Transverse colon (tissue), 4 donors: ENCODE measurements at regions of chr3 and their contacts with region 1.

Region 1: GRCh38 chr3:57100046-57100695 is 39.7 kb downstream of the SPATA12 start:
- DNase-seq: peak; percentile 71
- H3K4me3 ChIP-seq: no peak overlapping the region
- H3K27ac ChIP-seq: no peak overlapping the region
- H3K4me1 ChIP-seq: no peaks in the 10 kb centered on the region
- H3K27me3 ChIP-seq: no peaks in the 10 kb centered on the region
- CTCF ChIP-seq: peak; percentile 82 to 92 (median 87)
- EP300 ChIP-seq: no peak
- POLR2A ChIP-seq: no peak

Region 2: GRCh38 chr3:57169872-57170623 is 69.9 kb after region 1 on chr3:
- in situ Hi-C with region 1: no loop called
- intact Hi-C with region 1: loop called (anchors 5 kb)
- DNase-seq: peak; percentile 81
- H3K4me3 ChIP-seq: peak overlapping the region; percentile 32 to 51 (median 44)
- H3K27ac ChIP-seq: peak overlapping the region in 2 of 4 donors; percentile 19 to 25
- H3K4me1 ChIP-seq: peaks cover 0 to 8% (median 7%) of the 10 kb centered on the region in 4 donors
- H3K27me3 ChIP-seq: peaks cover 9% of the 10 kb centered on the region
- CTCF ChIP-seq: peak; percentile 84 to 90 (median 87)
- EP300 ChIP-seq: no peak
- POLR2A ChIP-seq: no peak

Region 3: GRCh38 chr3:57221883-57222282 is 121.7 kb after region 1 on chr3:
- in situ Hi-C with region 1: no loop called
- intact Hi-C with region 1: loop called (anchors 5 kb)
- DNase-seq: no peak
- H3K4me3 ChIP-seq: no peak overlapping the region
- H3K27ac ChIP-seq: no peak overlapping the region
- H3K4me1 ChIP-seq: peaks cover 0 to 8% (median 4%) of the 10 kb centered on the region in 4 donors
- H3K27me3 ChIP-seq: no peaks in the 10 kb centered on the region
- CTCF ChIP-seq: no peak
- EP300 ChIP-seq: no peak
- POLR2A ChIP-seq: no peak

Region 4: GRCh38 chr3:57298041-57298440 is 197.9 kb after region 1 on chr3:
- in situ Hi-C with region 1: no loop called
- intact Hi-C with region 1: no loop called
- DNase-seq: no peak
- H3K4me3 ChIP-seq: no peak overlapping the region
- H3K27ac ChIP-seq: no peak overlapping the region
- H3K4me1 ChIP-seq: no peaks in the 10 kb centered on the region
- H3K27me3 ChIP-seq: peaks cover 6% of the 10 kb centered on the region
- CTCF ChIP-seq: no peak
- EP300 ChIP-seq: no peak
- POLR2A ChIP-seq: no peak